Adrenal gland (tissue), 19 donors: ENCODE measurements at regions of chr4 and their contacts with region 1.

Region 1: GRCh38 chr4:185039508-185040273 is 21.4 kb downstream of the HELT start:
- DNase-seq: peak; percentile 41 to 78 (median 60)
- H3K4me3 ChIP-seq: peak overlapping the region in 1 of 4 donors; percentile 43
- H3K27ac ChIP-seq: no peak overlapping the region
- H3K4me1 ChIP-seq: no peaks in the 10 kb centered on the region
- H3K27me3 ChIP-seq: no peaks in the 10 kb centered on the region
- CTCF ChIP-seq: peak; percentile 64 to 90 (median 84)
- POLR2A ChIP-seq: no peak

Region 2: DNA sequence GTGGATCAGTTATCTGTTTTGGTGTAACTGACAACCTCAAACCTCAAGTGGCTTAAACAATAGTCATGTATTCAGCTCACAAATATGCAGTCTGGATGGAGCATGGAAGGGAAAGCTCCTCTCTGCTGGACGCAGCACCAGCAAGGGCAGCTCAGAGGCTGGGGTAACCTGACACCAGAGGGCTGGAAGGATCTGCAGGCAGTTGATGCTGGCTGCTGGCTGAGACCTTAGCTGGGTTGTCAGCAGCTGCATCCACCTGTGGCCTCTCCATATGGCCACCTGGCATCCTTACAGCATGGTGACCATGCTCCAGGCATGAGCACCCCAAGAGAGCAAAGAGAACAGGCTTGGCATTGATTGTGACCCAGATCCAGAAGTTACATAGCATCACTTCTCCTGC is 868.7 kb before region 1 on chr4:
- intact Hi-C with region 1: no loop called
- DNase-seq: no peak
- H3K4me3 ChIP-seq: no peak overlapping the region
- H3K27ac ChIP-seq: no peak overlapping the region
- H3K4me1 ChIP-seq: peaks cover 0 to 9% of the 10 kb centered on the region in 2 donors
- H3K27me3 ChIP-seq: peaks cover 6% of the 10 kb centered on the region
- CTCF ChIP-seq: no peak
- POLR2A ChIP-seq: no peak

Region 3: DNA sequence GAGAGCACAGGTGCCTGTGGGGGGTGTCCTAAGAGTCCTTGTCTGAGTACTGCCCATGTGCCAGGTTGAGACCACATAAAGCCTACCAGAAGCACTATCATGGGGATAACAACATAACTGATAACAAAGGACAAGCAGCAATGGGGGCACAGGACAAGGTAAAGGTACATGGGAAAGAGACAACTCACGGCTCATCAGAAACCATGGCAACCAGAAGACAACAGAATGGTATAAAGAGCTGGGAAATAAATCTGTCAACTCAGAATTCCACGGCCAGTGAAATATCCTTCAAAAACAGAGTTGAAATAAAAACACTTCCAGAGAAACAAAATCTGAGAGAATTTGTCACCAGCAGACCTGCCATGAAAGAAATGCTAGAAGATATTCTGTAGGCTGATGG is 325.8 kb before region 1 on chr4:
- intact Hi-C with region 1: no loop called
- DNase-seq: no peak
- H3K4me3 ChIP-seq: no peak overlapping the region
- H3K27ac ChIP-seq: no peak overlapping the region
- H3K4me1 ChIP-seq: no peaks in the 10 kb centered on the region
- H3K27me3 ChIP-seq: no peaks in the 10 kb centered on the region
- CTCF ChIP-seq: no peak
- POLR2A ChIP-seq: no peak

Region 4: GRCh38 chr4:185096032-185096653 is 56.5 kb after region 1 on chr4:
- intact Hi-C with region 1: loop called in 1 of 2 experiments (anchors 5 kb)
- DNase-seq: peak in 5 of 7 donors; percentile 43 to 70 (median 50)
- H3K4me3 ChIP-seq: no peak overlapping the region
- H3K27ac ChIP-seq: no peak overlapping the region
- H3K4me1 ChIP-seq: no peaks in the 10 kb centered on the region
- H3K27me3 ChIP-seq: no peaks in the 10 kb centered on the region
- CTCF ChIP-seq: peak; percentile 42 to 79 (median 64)
- POLR2A ChIP-seq: no peak

Region 5: GRCh38 chr4:185134307-185134869 is 94.7 kb after region 1 on chr4:
- intact Hi-C with region 1: loop called (anchors 5 to 10 kb)
- DNase-seq: no peak
- H3K4me3 ChIP-seq: no peak overlapping the region
- H3K27ac ChIP-seq: no peak overlapping the region
- H3K4me1 ChIP-seq: no peaks in the 10 kb centered on the region
- H3K27me3 ChIP-seq: no peaks in the 10 kb centered on the region
- CTCF ChIP-seq: peak; percentile 72 to 85 (median 80)
- POLR2A ChIP-seq: no peak

Region 6: GRCh38 chr4:185201983-185202962 is 162.6 kb after region 1 on chr4:
- intact Hi-C with region 1: no loop called
- DNase-seq: no peak
- H3K4me3 ChIP-seq: no peak overlapping the region
- H3K27ac ChIP-seq: peak overlapping the region in 3 of 5 donors; percentile 22 to 99 (median 40)
- H3K4me1 ChIP-seq: peaks cover 9 to 15% of the 10 kb centered on the region in 2 donors
- H3K27me3 ChIP-seq: no peaks in the 10 kb centered on the region
- CTCF ChIP-seq: no peak
- POLR2A ChIP-seq: no peak